ENCODE measurements at regions of chr21 and their contacts with region 1.

Region 1: DNA sequence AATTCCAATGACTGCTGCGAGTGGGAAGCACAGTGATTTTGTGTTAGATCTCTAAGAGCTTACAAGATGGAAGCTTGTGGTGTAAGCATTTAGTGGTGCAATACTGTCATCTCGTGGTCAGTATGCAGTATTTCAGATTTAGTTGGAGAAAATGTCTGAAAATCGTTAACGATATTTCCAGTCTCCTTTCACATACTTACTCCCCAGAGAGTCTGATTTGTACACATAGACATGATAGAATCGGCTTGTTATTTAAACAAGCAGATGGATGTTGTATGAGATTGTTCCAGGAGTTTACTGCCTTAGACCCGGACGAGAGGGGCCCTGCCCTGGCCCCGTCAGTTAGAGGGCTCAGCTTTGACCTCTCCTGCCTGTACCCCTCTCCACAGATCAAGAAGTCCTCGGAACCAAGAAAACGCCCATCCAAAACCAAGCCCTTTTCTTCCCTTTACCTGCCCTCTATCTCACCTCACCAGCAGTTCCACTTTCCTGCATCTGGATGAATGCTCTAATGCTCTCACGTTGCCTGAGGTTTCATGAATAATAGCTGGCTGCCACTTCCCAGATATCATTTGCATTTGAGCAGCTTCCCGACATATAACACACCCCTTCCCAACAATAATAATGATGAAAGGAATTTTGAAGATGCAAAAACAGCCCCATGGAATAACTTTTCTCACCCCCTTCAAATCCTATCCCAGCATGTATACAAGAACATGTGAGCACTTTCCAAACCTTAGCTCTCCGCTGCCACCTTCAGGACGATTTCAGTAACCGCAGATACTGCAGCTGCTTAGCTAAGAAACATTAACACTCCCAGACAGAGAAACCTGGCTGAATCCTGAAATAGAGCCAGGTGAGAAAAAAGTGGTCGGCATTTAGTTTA is 247.3 kb downstream of the LTN1 start:
- DNase-seq: peak; percentile 79 to 95 (median 89)
- H3K4me3 ChIP-seq: peak overlapping the region; percentile 70 to 93 (median 70)
- H3K27ac ChIP-seq: peak overlapping the region in 1 of 2 donors; percentile 76
- H3K4me1 ChIP-seq: peaks cover 0 to 3% (median 0%) of the 10 kb centered on the region in 3 donors
- H3K27me3 ChIP-seq: no peaks in the 10 kb centered on the region
- CTCF ChIP-seq: peak; percentile 99

Region 2: DNA sequence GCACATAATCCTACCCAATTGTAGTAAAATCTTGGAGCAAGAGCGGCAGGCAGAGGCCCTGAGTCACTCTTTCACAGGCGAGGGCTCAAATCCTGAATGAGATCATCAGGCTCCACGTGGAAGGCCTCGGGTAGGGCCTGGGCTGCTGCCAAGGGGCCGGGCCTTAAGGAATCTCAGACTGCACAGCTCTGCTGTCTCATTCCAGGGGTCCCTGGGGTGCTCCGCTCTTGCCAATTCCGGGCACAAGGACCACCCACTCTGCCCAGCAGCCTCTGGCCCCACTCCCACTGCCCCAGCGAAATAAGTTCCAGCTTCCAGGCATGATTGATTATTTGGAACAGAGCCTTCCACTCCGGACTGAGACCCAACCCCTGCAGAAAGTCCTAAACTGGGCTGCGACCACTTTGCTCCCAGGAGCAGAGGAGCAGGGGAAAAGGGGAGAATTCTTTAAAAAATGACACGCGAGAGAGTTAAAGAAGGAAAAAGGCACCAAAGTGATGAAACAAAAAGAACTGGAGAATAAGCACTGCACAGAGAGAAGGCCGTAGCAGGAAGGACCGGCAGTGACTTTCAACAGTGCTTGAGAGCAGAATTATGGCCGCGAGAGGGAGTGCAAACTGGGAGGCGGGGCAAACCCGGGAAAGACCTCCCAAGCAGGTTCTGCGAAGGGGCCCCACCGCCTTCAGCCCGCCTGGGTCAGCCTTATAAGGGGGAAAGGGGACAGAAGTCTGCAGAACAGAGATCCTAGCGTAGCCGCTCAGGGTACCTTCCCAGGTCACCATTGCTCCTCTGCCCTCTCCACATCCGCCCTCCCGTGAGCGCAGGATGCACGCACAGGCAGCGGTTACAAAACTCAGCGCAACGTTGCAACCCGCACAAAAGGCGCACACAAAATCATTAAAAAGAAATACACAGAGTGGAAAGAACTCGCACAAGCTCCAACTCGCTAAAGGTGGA is 1902.1 kb before region 1 on chr21:
- intact Hi-C with region 1: loop called (anchors 10 kb)
- DNase-seq: peak; percentile 87 to 96 (median 93)
- H3K4me3 ChIP-seq: peak overlapping the region; percentile 82 to 92 (median 87)
- H3K27ac ChIP-seq: peak overlapping the region; percentile 88 to 91
- H3K4me1 ChIP-seq: peaks cover 0 to 14% (median 13%) of the 10 kb centered on the region in 3 donors
- H3K27me3 ChIP-seq: no peaks in the 10 kb centered on the region
- CTCF ChIP-seq: no peak

Region 3: DNA sequence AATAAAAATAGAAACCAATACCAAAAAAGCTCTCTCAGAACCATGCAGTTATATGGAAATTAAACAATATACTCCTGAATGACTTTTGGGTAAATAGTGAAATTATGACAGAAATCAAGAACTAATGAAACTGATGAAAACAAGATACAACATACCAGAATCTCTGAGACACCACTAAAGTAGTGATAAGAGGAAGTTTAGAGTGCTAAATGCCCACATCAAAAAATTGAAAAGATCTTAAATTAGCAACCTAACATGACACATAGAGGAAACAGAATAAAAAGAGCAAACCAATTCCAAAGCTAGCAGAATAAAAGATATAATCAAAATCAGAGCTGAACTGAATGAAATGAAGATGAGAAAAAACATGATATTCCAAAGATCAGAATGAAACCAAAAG is 183.6 kb before region 1 on chr21:
- intact Hi-C with region 1: no loop called
- DNase-seq: no peak
- H3K4me3 ChIP-seq: no peak overlapping the region
- H3K27ac ChIP-seq: no peak overlapping the region
- H3K4me1 ChIP-seq: no peaks in the 10 kb centered on the region
- H3K27me3 ChIP-seq: no peaks in the 10 kb centered on the region
- CTCF ChIP-seq: no peak

Region 4: GRCh38 chr21:28657566-28657965 is 87.8 kb before region 1 on chr21:
- intact Hi-C with region 1: no loop called
- DNase-seq: no peak
- H3K4me3 ChIP-seq: no peak overlapping the region
- H3K27ac ChIP-seq: no peak overlapping the region
- H3K4me1 ChIP-seq: no peaks in the 10 kb centered on the region
- H3K27me3 ChIP-seq: no peaks in the 10 kb centered on the region
- CTCF ChIP-seq: no peak

Measured in kidney (tissue), 22 donors.